ENCODE measurements at regions of chr10 and their contacts with region 1.

Region 1: GRCh38 chr10:50593523-50594376 is 30.0 kb downstream of the SGMS1 start:
- DNase-seq: no peak
- ATAC-seq: peak; percentile 47
- H3K4me3 ChIP-seq: no peak overlapping the region
- H3K27ac ChIP-seq: peak overlapping the region; percentile 81
- H3K4me1 ChIP-seq: peaks cover 6 to 51% of the 10 kb centered on the region in 2 experiments; a peak in 3 of 5 replicates
- H3K27me3 ChIP-seq: no peaks in the 10 kb centered on the region
- CTCF ChIP-seq: no peak
- EP300 ChIP-seq: no peak
- POLR2A ChIP-seq: no peak
- RAD21 ChIP-seq: no peak

Region 2: GRCh38 chr10:50582766-50583762 is 10.7 kb before region 1 on chr10:
- CTCF ChIA-PET with region 1: no interaction called
- POLR2A ChIA-PET with region 1: interaction called, 67 read pairs
- in situ Hi-C with region 1: no loop called
- intact Hi-C with region 1: no loop called
- DNase-seq: peak; percentile 83 to 90 (median 87)
- ATAC-seq: peak; percentile 79
- H3K4me3 ChIP-seq: no peak overlapping the region
- H3K27ac ChIP-seq: peak overlapping the region; percentile 56
- H3K4me1 ChIP-seq: peaks cover 24 to 86% of the 10 kb centered on the region in 2 experiments
- H3K27me3 ChIP-seq: no peaks in the 10 kb centered on the region
- CTCF ChIP-seq: no peak
- EP300 ChIP-seq: peak; percentile 39; the same call in 1 of the 2 replicates
- POLR2A ChIP-seq: no peak
- RAD21 ChIP-seq: no peak

Region 3: GRCh38 chr10:50605269-50606263 is 11.8 kb after region 1 on chr10:
- CTCF ChIA-PET with region 1: no interaction called
- POLR2A ChIA-PET with region 1: interaction called, 14 read pairs
- in situ Hi-C with region 1: no loop called
- intact Hi-C with region 1: no loop called
- DNase-seq: peak in 1 of 4 experiments; percentile 69
- ATAC-seq: peak; percentile 68
- H3K4me3 ChIP-seq: no peak overlapping the region
- H3K27ac ChIP-seq: peak overlapping the region; percentile 36; the same call in 1 of the 3 replicates
- H3K4me1 ChIP-seq: peaks cover 14 to 62% of the 10 kb centered on the region in 2 experiments
- H3K27me3 ChIP-seq: no peaks in the 10 kb centered on the region
- CTCF ChIP-seq: no peak
- EP300 ChIP-seq: no peak; the same call in 1 of the 2 replicates
- POLR2A ChIP-seq: no peak
- RAD21 ChIP-seq: no peak